ENCODE measurements at regions of chr10 and their contacts with region 1.

Region 1: GRCh38 chr10:86376852-86377796 is 10.5 kb upstream of the GRID1 start:
- DNase-seq: peak; percentile 86
- H3K4me3 Mint-ChIP-seq: no peak overlapping the region
- H3K27ac Mint-ChIP-seq: no peak overlapping the region
- H3K4me1 Mint-ChIP-seq: no peaks in the 10 kb centered on the region
- H3K27me3 Mint-ChIP-seq: peaks cover 9% of the 10 kb centered on the region
- CTCF ChIP-seq: peak; percentile 90

Region 2: DNA sequence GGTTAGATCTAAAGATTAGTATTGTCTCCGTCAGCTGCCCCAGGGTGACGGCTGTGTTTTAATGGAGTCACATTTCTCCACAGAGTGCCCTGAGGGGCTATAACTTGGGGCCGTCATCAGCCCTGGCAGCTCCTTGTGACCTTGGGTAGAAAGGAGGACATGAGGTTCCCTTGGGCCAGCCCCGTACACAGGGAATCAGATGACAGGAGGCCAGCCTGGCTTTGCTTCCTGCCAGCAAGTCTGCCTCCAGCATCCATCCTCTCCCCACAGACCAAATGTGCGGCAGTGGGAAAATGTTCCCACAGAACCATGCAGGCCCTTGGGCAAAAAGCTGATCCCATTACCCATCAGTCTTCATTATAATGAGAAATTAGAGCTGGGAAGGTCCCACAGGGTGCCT is 918.9 kb before region 1 on chr10:
- CTCF ChIA-PET with region 1: no interaction called
- intact Hi-C with region 1: no loop called
- DNase-seq: no peak
- H3K4me3 Mint-ChIP-seq: no peak overlapping the region
- H3K27ac Mint-ChIP-seq: no peak overlapping the region
- H3K4me1 Mint-ChIP-seq: no peaks in the 10 kb centered on the region
- H3K27me3 Mint-ChIP-seq: peaks cover 22% of the 10 kb centered on the region
- CTCF ChIP-seq: no peak

Region 3: DNA sequence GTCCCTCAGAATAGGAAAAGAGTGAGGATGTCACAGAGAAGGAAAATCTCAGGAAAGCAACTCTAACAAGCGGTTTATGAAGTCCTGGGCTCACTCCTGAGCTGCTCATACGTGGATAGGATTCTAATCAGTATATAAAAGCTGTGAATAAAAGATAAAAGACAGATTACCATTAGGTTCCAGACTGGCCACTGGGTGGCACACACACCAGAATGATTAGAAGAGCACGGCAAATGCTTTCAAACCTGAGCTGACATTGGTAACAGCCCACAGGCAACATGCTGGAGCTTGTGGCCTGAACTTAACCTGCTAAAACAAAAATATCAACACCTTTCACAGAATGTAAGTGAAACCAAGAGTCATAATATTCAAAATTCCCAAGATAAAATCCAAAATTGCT is 381.3 kb before region 1 on chr10:
- CTCF ChIA-PET with region 1: no interaction called
- intact Hi-C with region 1: loop called (anchors 1 kb)
- DNase-seq: peak; percentile 12
- H3K4me3 Mint-ChIP-seq: no peak overlapping the region
- H3K27ac Mint-ChIP-seq: no peak overlapping the region
- H3K4me1 Mint-ChIP-seq: no peaks in the 10 kb centered on the region
- H3K27me3 Mint-ChIP-seq: no peaks in the 10 kb centered on the region
- CTCF ChIP-seq: no peak

Region 4: GRCh38 chr10:86178401-86179152 is 198.5 kb before region 1 on chr10:
- CTCF ChIA-PET with region 1: no interaction called
- intact Hi-C with region 1: loop called (anchors 2 kb)
- DNase-seq: peak; percentile 49
- H3K4me3 Mint-ChIP-seq: no peak overlapping the region
- H3K27ac Mint-ChIP-seq: no peak overlapping the region
- H3K4me1 Mint-ChIP-seq: no peaks in the 10 kb centered on the region
- H3K27me3 Mint-ChIP-seq: peaks cover 26% of the 10 kb centered on the region
- CTCF ChIP-seq: peak; percentile 29

Region 5: GRCh38 chr10:86261941-86262687 is 115.0 kb before region 1 on chr10:
- CTCF ChIA-PET with region 1: interaction called, 4 read pairs
- intact Hi-C with region 1: loop called (anchors 5 kb)
- DNase-seq: peak; percentile 60
- H3K4me3 Mint-ChIP-seq: no peak overlapping the region
- H3K27ac Mint-ChIP-seq: no peak overlapping the region
- H3K4me1 Mint-ChIP-seq: no peaks in the 10 kb centered on the region
- H3K27me3 Mint-ChIP-seq: peaks cover 46% of the 10 kb centered on the region
- CTCF ChIP-seq: no peak

Region 6: GRCh38 chr10:86545101-86545500 is 168.0 kb after region 1 on chr10:
- CTCF ChIA-PET with region 1: no interaction called
- intact Hi-C with region 1: no loop called
- DNase-seq: no peak
- H3K4me3 Mint-ChIP-seq: no peak overlapping the region
- H3K27ac Mint-ChIP-seq: no peak overlapping the region
- H3K4me1 Mint-ChIP-seq: no peaks in the 10 kb centered on the region
- H3K27me3 Mint-ChIP-seq: peaks cover 11% of the 10 kb centered on the region
- CTCF ChIP-seq: no peak

Region 7: GRCh38 chr10:86684331-86685097 is 307.4 kb after region 1 on chr10:
- CTCF ChIA-PET with region 1: no interaction called
- intact Hi-C with region 1: no loop called
- DNase-seq: peak; percentile 58
- H3K4me3 Mint-ChIP-seq: no peak overlapping the region
- H3K27ac Mint-ChIP-seq: no peak overlapping the region
- H3K4me1 Mint-ChIP-seq: no peaks in the 10 kb centered on the region
- H3K27me3 Mint-ChIP-seq: peaks cover 47% of the 10 kb centered on the region
- CTCF ChIP-seq: no peak

Region 8: GRCh38 chr10:86698207-86698940 is 321.2 kb after region 1 on chr10:
- CTCF ChIA-PET with region 1: no interaction called
- intact Hi-C with region 1: no loop called
- DNase-seq: no peak
- H3K4me3 Mint-ChIP-seq: no peak overlapping the region
- H3K27ac Mint-ChIP-seq: no peak overlapping the region
- H3K4me1 Mint-ChIP-seq: no peaks in the 10 kb centered on the region
- H3K27me3 Mint-ChIP-seq: peaks cover 19% of the 10 kb centered on the region
- CTCF ChIP-seq: no peak

Measured in Calu3 (cell line).